Activated CD4-positive, alpha-beta T cell treated with anti-CD3 and anti-CD28 coated beads, Interleukin-2, amount 10 ng/mL, durations not matched to agents 24 days and 14 days (primary cell): ENCODE measurements at regions of chr11 and their contacts with region 1.

Region 1: GRCh38 chr11:63553741-63554151 is 9.4 kb downstream of the PLAAT2 start:
- DNase-seq: peak; percentile 84
- H3K4me3 Mint-ChIP-seq: peak overlapping the region; percentile 73
- H3K27ac Mint-ChIP-seq: peak overlapping the region; percentile 91
- H3K4me1 Mint-ChIP-seq: peaks cover 28% of the 10 kb centered on the region
- H3K27me3 Mint-ChIP-seq: no peaks in the 10 kb centered on the region

Region 2: GRCh38 chr11:63536669-63537292 is 17.0 kb before region 1 on chr11 and contains the start of gene PLAAT4:
- intact Hi-C with region 1: loop called (anchors 1 kb)
- DNase-seq: peak; percentile 88
- H3K4me3 Mint-ChIP-seq: peak within 1 kb of the TSS; percentile 90
- H3K27ac Mint-ChIP-seq: peak within 1 kb of the TSS; percentile 88
- H3K4me1 Mint-ChIP-seq: peaks cover 66% of the 10 kb centered on the region
- H3K27me3 Mint-ChIP-seq: no peaks in the 10 kb centered on the region
- total RNA-seq, gene PLAAT4: 12.2 and 14.7 TPM in 2 replicates

Region 3: GRCh38 chr11:63614136-63614664 is 60.5 kb after region 1 on chr11 and contains the start of gene PLAAT3:
- intact Hi-C with region 1: loop called (anchors 5 kb)
- DNase-seq: peak; percentile 78
- H3K4me3 Mint-ChIP-seq: peak within 1 kb of the TSS; percentile 84
- H3K27ac Mint-ChIP-seq: no peak within 1 kb of the TSS
- H3K4me1 Mint-ChIP-seq: peaks cover 2% of the 10 kb centered on the region
- H3K27me3 Mint-ChIP-seq: peaks cover 7% of the 10 kb centered on the region
- total RNA-seq, gene PLAAT3: 2.1 and 3.1 TPM in 2 replicates

Region 4: DNA sequence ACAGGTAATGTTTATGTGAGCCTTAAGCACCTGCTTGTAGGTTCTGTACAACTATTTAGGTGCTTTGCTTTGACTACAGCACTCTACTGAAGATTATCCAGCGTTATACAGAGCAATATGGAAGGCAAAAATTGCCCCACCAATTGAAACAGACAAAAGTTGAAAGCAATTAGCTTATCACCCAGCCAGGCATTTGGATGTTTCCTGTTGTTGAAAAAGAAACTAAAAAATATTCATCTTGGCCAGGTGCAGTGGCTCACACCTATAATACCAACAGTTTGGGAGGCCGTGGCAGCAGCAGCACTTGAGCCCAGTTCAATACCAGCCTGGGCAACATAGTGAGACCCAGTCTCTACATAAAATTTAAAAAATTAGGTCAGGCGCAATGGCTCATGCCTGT is 98.9 kb after region 1 on chr11:
- intact Hi-C with region 1: no loop called
- DNase-seq: no peak
- H3K4me3 Mint-ChIP-seq: no peak overlapping the region
- H3K27ac Mint-ChIP-seq: no peak overlapping the region
- H3K4me1 Mint-ChIP-seq: peaks cover 6% of the 10 kb centered on the region
- H3K27me3 Mint-ChIP-seq: no peaks in the 10 kb centered on the region

Region 5: DNA sequence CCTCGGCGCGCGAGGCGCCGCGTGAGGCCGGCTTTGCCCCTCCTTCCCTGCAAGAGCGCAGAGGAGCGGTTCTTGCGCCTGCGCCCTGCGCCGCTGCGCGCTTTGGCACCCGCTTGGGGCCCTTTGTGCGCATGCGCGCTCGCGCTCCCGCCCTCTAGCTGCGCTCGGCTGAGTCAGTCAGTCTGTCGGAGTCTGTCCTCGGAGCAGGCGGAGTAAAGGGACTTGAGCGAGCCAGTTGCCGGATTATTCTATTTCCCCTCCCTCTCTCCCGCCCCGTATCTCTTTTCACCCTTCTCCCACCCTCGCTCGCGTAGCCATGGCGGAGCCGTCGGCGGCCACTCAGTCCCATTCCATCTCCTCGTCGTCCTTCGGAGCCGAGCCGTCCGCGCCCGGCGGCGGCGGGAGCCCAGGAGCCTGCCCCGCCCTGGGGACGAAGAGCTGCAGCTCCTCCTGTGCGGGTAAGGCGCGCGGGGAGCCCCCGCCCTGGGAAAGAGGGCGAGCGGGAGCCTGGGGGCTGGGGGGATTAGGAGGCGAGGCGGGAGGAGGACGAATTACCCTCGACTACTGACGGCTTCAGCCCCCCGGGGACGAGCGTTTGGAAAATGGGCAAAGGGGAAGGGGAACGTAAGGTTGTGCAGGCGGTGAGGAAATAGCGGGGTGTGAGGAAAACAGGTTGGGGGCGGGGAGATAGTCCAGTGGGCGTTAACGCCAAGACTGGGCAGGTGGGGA is 127.7 kb after region 1 on chr11 and contains the start of gene RTN3:
- intact Hi-C with region 1: no loop called
- DNase-seq: peak; percentile 100
- H3K4me3 Mint-ChIP-seq: peak within 1 kb of the TSS; percentile 87
- H3K27ac Mint-ChIP-seq: peak within 1 kb of the TSS; percentile 76
- H3K4me1 Mint-ChIP-seq: peaks cover 21% of the 10 kb centered on the region
- H3K27me3 Mint-ChIP-seq: peaks cover 10% of the 10 kb centered on the region
- total RNA-seq, gene RTN3: 51.3 and 54.2 TPM in 2 replicates

Region 6: DNA sequence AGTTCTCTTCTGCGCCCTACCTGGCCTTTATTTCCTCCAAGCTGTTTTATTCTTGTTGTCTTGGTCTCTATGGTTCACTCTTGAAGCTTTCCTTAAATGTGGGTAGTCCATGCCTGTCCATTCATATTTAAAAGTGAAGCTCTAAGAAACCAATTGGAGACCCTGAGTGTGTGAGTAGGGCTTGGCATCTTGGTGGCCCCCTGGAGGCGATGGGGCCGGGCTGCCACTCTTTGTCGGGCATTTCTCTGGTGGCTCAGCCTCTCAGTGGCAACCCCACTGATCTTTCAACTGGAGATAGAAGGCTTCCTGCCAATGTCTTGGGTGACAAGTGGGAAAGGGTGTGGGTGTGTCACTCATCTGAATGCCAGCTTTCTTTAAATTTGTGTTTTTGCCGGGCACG is 663.1 kb after region 1 on chr11:
- intact Hi-C with region 1: no loop called
- DNase-seq: no peak
- H3K4me3 Mint-ChIP-seq: no peak overlapping the region
- H3K27ac Mint-ChIP-seq: no peak overlapping the region
- H3K4me1 Mint-ChIP-seq: peaks cover 15% of the 10 kb centered on the region
- H3K27me3 Mint-ChIP-seq: no peaks in the 10 kb centered on the region